Activated CD4-positive, alpha-beta T cell treated with anti-CD3 and anti-CD28 coated beads, Interleukin-2, amount 10 ng/mL, durations not matched to agents 24 days and 14 days (primary cell): ENCODE measurements at regions of chr2 and their contacts with region 1.

Region 1: DNA sequence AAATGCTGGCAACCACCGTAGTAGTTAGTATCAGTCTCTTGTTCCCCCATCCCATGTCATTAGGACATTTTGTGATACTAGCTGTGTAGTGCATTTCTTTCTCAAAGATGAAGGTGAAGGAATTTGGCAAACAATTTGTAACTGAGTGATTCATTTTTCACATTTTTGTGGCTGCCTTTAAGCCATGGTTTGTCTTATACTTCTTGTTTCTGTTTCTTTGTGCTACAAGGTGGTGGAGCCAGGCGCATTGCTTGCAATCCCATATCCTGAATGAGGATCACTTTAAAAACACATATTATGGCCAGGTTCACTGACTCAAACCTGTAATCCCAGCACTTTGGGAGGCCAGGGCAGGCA is 40.6 kb downstream of the GPD2 start:
- DNase-seq: peak; percentile 64
- H3K4me3 Mint-ChIP-seq: peak overlapping the region; percentile 57
- H3K27ac Mint-ChIP-seq: peak overlapping the region; percentile 76
- H3K4me1 Mint-ChIP-seq: peaks cover 46% of the 10 kb centered on the region
- H3K27me3 Mint-ChIP-seq: no peaks in the 10 kb centered on the region

Region 2: GRCh38 chr2:155830817-155831574 is 645.8 kb before region 1 on chr2:
- intact Hi-C with region 1: no loop called
- DNase-seq: no peak
- H3K4me3 Mint-ChIP-seq: no peak overlapping the region
- H3K27ac Mint-ChIP-seq: no peak overlapping the region
- H3K4me1 Mint-ChIP-seq: no peaks in the 10 kb centered on the region
- H3K27me3 Mint-ChIP-seq: no peaks in the 10 kb centered on the region

Region 3: DNA sequence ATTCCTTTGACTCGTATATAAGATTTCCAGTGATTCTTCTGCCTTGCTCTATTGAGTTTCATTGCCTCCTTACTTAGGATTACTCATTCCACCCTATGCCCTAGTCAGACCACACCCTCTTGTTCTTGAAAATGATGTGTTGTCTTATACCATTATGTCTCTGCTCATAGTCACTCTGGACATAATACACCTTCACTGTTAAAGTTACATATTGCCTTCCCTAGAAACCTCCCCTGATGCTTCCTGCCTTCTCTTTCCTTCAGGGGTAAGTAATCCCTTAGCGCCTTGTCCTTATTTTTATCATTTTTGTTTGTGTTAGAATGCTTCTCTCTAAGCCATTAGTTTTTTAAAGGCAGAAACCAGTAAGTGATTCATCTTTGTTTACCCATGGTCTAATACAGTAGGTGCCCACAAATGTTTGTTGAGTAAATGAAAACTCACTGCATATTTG is 21.4 kb before region 1 on chr2:
- intact Hi-C with region 1: loop called (anchors 2 kb)
- DNase-seq: no peak
- H3K4me3 Mint-ChIP-seq: no peak overlapping the region
- H3K27ac Mint-ChIP-seq: no peak overlapping the region
- H3K4me1 Mint-ChIP-seq: peaks cover 17% of the 10 kb centered on the region
- H3K27me3 Mint-ChIP-seq: no peaks in the 10 kb centered on the region

Region 4: GRCh38 chr2:156465573-156465972 is 11.3 kb before region 1 on chr2:
- intact Hi-C with region 1: no loop called
- DNase-seq: no peak
- H3K4me3 Mint-ChIP-seq: no peak overlapping the region
- H3K27ac Mint-ChIP-seq: no peak overlapping the region
- H3K4me1 Mint-ChIP-seq: peaks cover 14% of the 10 kb centered on the region
- H3K27me3 Mint-ChIP-seq: no peaks in the 10 kb centered on the region

Region 5: GRCh38 chr2:156538083-156538504 is 61.3 kb after region 1 on chr2:
- intact Hi-C with region 1: loop called (anchors 5 kb)
- DNase-seq: no peak
- H3K4me3 Mint-ChIP-seq: no peak overlapping the region
- H3K27ac Mint-ChIP-seq: no peak overlapping the region
- H3K4me1 Mint-ChIP-seq: peaks cover 21% of the 10 kb centered on the region
- H3K27me3 Mint-ChIP-seq: no peaks in the 10 kb centered on the region